Left colon (tissue), 2 donors: ENCODE measurements at regions of chr12 and their contacts with region 1.

Region 1: GRCh38 chr12:68223083-68223747 is 2.4 kb downstream of the IL26 start:
- DNase-seq: peak; percentile 72 to 82
- ATAC-seq: peak; percentile 99

Region 2: DNA sequence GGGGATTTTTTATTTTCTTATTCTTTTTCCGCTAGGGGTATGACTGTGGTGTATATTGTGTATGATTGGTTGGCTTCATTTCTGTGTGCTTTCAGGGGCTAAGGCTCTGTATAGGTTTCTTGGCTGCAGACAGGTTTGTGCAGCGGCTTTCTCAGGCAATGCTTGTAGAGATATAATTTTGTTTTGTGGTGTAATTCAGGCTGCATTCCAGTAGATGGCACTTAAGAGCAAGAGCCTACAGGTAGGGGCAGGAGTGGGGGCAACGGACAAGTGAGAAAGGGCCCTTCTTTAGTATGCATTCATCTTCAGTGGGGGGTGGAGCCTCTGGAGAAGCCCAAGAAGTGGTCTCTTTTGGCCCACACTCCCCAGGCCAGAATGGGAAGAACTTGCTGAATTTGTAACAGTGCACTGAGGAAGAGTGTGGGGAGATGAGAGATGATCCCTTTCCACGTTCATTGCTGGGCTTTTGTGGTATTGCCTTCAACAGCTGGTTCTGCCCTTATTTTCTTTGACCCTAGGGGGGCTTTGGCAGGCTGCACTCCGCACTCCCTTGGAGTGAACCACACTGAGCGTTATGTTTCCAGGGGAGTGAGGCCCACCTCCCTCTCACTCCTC is 155.3 kb before region 1 on chr12:
- intact Hi-C with region 1: no loop called
- DNase-seq: no peak
- ATAC-seq: no peak

Region 3: GRCh38 chr12:68317047-68317667 is 93.9 kb after region 1 on chr12:
- intact Hi-C with region 1: loop called (anchors 2 to 10 kb)
- DNase-seq: peak in 1 of 2 donors; percentile 36
- ATAC-seq: no peak